Testis (tissue), 5 donors: ENCODE measurements at regions of chr15 and their contacts with region 1.

Region 1: GRCh38 chr15:78437762-78438302 is at the start of gene IREB2:
- DNase-seq: peak; percentile 98
- H3K4me3 ChIP-seq: peak within 1 kb of the TSS; percentile 94 to 99
- H3K27ac ChIP-seq: peak within 1 kb of the TSS; percentile 94 to 98
- H3K4me1 ChIP-seq: peaks cover 16% of the 10 kb centered on the region
- H3K27me3 ChIP-seq: no peaks in the 10 kb centered on the region
- CTCF ChIP-seq: no peak
- POLR2A ChIP-seq: no peak
- total RNA-seq, gene IREB2: 52.3 to 69.0 TPM

Region 2: DNA sequence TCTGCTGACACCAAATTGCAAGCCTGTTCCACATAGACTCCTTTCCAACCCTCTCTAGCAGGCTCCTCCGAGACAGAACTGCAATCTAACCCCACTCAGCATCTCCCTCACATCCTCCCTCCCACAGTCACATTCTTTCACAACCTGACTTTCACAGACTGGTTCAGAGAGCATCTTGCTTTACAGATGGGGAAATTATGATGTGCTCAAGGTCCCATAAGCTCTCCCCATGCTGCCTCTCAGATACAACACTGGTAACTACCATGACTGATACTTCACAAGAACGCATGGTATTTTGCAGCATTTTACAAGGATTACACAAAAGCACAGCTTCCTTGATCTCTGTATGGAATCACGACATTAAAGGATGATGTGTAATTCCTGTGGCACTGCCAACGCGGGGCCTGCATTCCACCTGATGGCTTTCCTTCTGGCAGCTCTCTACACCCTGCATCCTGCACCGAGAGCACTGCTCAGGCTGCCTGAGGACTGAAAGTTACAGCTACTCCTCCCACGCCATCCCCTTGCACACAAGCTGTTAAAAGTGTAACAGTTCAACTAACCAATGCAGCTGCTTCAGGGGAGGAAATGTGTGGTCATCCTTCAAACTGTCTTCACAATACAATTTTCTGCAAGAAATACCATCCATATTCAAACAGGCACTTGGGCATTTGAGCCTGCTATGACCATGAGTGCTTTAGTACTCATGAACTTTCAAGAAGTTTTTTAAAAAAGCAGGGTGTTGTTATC is 388.0 kb before region 1 on chr15:
- intact Hi-C with region 1: no loop called
- DNase-seq: peak; percentile 66
- H3K4me3 ChIP-seq: no peak overlapping the region
- H3K27ac ChIP-seq: peak overlapping the region in 1 of 2 donors; percentile 7
- H3K4me1 ChIP-seq: peaks cover 58% of the 10 kb centered on the region
- H3K27me3 ChIP-seq: no peaks in the 10 kb centered on the region
- CTCF ChIP-seq: no peak
- POLR2A ChIP-seq: no peak

Region 3: GRCh38 chr15:78299101-78299930 is 138.5 kb before region 1 on chr15 and contains the start of gene SKIC8:
- intact Hi-C with region 1: loop called (anchors 5 kb)
- DNase-seq: peak; percentile 94
- H3K4me3 ChIP-seq: peak within 1 kb of the TSS; percentile 86 to 97
- H3K27ac ChIP-seq: peak within 1 kb of the TSS; percentile 78 to 81
- H3K4me1 ChIP-seq: peaks cover 8% of the 10 kb centered on the region
- H3K27me3 ChIP-seq: no peaks in the 10 kb centered on the region
- CTCF ChIP-seq: no peak
- POLR2A ChIP-seq: no peak
- total RNA-seq, gene SKIC8: 82.3 to 93.1 TPM